ENCODE measurements at regions of chr1 and their contacts with region 1.

Region 1: DNA sequence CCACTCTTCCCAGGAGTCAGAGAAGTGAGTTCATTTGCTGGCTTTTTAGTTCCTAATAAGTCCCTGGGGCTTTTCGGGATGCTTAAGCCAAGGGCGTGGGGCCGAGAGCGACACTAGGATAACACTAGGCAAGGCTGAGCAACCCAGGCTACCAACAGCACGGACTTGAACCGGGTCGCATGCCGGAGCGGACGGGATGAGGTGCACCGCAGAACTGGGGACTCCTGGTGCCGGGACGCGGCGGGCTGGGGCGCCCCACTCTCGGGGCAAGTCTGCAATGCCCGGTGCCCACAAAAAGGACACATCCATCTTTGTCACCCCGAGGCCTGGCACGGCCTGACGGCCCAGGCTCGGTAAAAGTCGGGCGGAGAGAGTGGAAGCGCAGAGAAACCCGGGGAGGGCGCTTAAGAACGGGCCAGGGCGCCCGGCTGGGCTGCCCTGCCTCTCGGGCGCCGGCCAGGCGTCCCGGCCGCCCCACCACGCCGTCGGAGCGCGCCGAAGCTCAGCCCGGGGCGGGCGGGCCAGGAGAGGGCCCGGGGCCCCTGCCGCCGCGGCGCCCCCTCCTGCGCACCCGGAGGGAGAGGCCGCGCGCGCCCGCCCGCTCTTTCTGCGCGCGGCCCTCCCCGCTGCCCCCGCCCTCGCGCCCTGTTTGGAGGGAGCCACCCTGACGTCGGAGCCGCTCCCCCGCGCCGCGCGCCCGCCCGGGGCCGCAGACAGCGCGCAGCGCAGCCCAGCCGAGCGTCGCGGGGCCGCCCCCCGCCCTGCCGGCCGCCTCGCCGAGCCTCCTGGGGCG is at the start of gene NBL1:
- DNase-seq: peak; percentile 75
- H3K4me3 Mint-ChIP-seq: peak within 1 kb of the TSS; percentile 94
- H3K27ac Mint-ChIP-seq: peak within 1 kb of the TSS; percentile 95
- H3K4me1 Mint-ChIP-seq: peaks cover 33% of the 10 kb centered on the region
- H3K27me3 Mint-ChIP-seq: peaks cover 24% of the 10 kb centered on the region
- total RNA-seq, gene NBL1: 53.0 and 55.5 TPM in 2 replicates

Region 2: GRCh38 chr1:19405761-19406487 is 237.9 kb before region 1 on chr1:
- intact Hi-C with region 1: no loop called
- DNase-seq: no peak
- H3K4me3 Mint-ChIP-seq: no peak overlapping the region
- H3K27ac Mint-ChIP-seq: peak overlapping the region; percentile 50
- H3K4me1 Mint-ChIP-seq: peaks cover 33% of the 10 kb centered on the region
- H3K27me3 Mint-ChIP-seq: no peaks in the 10 kb centered on the region

Region 3: DNA sequence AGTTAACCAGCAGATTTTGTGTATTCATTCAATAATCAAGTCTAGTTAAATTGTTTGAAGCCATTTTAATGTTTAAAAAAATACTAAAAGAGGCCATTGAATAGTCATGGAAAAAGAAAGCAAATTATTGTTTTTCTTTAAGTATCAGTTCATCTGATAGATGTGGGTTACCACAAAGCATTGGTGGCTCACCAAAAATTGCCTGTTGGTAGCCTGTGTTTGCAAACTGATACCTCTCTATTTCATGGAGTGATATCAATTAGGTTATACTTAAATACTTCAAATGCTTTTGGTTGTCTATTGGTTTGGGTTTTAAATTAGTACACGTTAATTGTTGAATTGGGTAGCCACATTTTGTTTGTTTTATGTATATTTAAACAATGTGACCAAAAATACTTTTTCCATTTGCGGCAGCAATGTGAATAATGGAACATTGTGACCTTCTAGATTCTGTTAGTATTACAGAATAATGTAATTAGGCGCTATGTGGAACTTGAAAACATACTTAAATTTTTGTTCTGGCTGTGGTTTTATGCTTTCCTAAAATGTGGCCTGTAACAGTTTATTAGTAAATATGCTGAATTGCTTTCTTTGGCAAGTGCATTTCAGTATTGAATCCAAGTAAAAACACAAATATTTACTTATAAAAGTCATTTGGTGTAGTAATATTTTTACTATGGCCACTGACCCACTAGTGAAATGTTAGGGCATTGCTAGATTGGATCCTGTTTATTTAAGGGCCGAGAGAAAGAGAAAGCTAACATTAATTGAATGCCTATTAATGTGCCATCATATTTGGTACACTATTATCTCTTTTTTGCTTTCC is 36.8 kb before region 1 on chr1:
- intact Hi-C with region 1: loop called (anchors 2 kb)
- DNase-seq: peak; percentile 46
- H3K4me3 Mint-ChIP-seq: peak overlapping the region; percentile 30
- H3K27ac Mint-ChIP-seq: peak overlapping the region; percentile 58
- H3K4me1 Mint-ChIP-seq: peaks cover 43% of the 10 kb centered on the region
- H3K27me3 Mint-ChIP-seq: no peaks in the 10 kb centered on the region